ENCODE measurements at regions of chr19 and their contacts with region 1.

Region 1: DNA sequence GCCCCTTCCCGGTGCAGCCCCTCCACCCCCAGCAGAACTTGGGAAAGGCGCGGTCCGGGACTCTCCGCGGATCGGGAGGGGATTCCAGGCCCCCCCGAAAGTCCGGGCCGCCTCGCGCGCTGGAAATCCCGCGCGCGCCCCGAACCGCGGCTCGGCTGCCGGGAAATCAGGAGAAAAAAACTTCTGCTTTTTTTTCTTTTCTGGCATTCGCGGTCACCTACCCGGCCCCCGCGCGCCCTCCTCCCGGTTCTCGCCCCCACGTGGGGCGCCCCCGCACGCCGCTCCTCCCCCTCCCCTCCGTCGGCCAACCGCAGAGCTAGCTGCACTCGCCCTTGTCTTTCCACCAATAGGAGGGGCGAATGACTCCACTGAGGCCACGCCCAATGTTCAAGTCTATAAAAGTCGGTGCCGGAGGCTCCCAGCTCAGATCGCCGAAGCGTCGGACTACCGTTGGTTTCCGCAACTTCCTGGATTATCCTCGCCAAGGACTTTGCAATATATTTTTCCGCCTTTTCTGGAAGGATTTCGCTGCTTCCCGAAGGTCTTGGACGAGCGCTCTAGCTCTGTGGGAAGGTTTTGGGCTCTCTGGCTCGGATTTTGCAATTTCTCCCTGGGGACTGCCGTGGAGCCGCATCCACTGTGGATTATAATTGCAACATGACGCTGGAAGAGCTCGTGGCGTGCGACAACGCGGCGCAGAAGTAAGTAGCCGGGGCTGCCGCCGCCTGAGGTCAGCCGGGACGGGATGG is at the start of gene GADD45B:
- DNase-seq: peak; percentile 98 to 99
- H3K4me3 ChIP-seq: peak within 1 kb of the TSS; percentile 75 to 99 (median 92)
- H3K27ac ChIP-seq: peak within 1 kb of the TSS; percentile 91 to 95 (median 93)
- H3K4me1 ChIP-seq: peaks cover 15 to 44% (median 43%) of the 10 kb centered on the region in 4 donors
- H3K27me3 ChIP-seq: no peaks in the 10 kb centered on the region
- CTCF ChIP-seq: no peak
- EP300 ChIP-seq: peak; percentile 53
- POLR2A ChIP-seq: peak in 3 of 4 donors; percentile 81 to 100 (median 100)
- total RNA-seq, gene GADD45B: 61.6 to 588 (median 91.0) TPM

Region 2: DNA sequence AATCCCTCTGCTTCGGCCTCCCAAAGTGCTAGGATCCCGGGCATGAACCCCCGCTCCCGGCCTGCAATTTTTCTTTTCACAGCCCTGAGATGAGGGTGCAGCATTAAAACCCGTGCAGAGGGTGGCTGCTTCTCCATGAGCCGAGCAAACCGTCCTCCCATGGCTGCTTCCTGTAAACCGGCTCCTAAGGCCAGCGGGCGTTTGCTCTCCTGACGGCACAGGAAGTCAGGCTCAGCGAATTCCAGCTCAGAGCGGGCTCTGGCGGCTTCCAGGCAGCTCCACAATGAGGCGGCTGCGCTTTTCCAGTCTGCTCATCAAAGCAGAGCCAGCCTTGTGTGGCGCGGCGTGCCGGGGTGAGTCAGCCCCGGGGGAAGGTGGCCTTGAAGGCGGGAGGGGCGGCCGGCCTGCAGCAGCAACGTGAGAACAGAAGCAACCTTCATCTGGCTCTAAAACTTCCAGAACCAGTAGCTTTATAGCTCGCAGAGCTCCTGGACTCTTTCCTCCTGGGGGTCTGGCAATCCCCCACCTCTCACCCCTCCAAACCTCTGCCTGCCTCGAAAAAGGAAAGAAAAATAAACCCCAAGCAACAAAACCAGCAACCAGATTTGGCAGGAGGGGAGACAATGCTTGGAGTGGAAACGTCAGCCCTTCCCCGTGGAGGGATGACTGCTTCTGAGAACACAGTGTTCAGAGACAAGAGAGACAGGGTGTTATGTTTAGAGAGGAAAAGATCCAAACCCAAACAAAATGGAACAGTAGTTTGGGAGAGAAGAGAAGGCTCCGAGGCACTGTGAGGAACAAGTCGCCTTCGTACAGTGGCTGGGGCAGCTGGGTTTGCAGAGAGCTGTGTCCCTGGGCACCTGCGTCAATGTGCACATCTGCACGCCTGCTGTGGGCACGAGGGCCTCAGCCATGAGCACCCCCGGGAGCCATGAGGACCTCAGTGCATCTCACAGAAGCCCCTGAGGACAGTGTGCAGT is 67.9 kb after region 1 on chr19:
- intact Hi-C with region 1: loop called (anchors 10 kb)
- DNase-seq: peak; percentile 91 to 97
- H3K4me3 ChIP-seq: peak overlapping the region; percentile 12 to 30 (median 20)
- H3K27ac ChIP-seq: peak overlapping the region; percentile 47 to 94 (median 90)
- H3K4me1 ChIP-seq: peaks cover 67 to 74% (median 70%) of the 10 kb centered on the region in 4 donors
- H3K27me3 ChIP-seq: no peaks in the 10 kb centered on the region
- CTCF ChIP-seq: peak in 4 of 7 experiments; percentile 8 to 37 (median 14)
- EP300 ChIP-seq: peak; percentile 93
- POLR2A ChIP-seq: no peak

Region 3: DNA sequence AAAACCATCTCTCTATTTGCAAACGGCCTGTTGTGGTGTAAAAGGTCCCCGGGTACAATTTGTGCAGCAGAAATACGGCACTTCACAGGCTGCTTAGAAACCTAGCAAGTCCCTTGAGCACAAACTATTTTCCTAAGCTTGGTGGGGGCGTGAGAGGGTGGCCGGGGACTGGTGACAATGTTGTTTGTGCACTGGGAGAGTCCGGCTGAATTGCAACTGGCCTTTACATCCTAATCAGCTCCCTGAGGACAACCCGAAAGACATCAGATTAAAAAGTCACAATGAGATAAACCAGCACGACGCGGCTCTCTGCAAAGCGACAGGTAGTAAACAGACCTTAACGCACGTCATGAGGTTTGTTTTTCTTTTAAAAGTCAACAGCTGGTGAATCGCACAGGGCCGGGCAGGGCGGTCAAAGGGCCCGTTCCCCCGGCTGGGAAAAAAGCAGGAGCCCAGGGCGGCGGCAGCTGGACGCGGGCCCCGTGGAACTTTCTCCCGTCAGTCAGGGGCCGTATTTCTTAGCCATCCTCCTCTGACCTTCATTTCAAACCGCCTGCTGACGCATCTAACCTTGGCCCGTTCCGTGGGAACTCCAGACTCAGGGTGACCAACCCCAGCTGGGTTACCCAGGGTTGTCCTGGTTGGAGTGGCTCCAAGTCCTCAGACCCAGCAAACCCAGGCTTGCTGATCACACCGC is 112.4 kb after region 1 on chr19:
- intact Hi-C with region 1: loop called (anchors 10 kb)
- DNase-seq: peak; percentile 85 to 86
- H3K4me3 ChIP-seq: peak overlapping the region in 2 of 4 donors; percentile 6 to 9
- H3K27ac ChIP-seq: peak overlapping the region; percentile 76 to 89 (median 85)
- H3K4me1 ChIP-seq: peaks cover 20 to 34% (median 28%) of the 10 kb centered on the region in 4 donors
- H3K27me3 ChIP-seq: no peaks in the 10 kb centered on the region
- CTCF ChIP-seq: no peak
- EP300 ChIP-seq: peak; percentile 20
- POLR2A ChIP-seq: no peak

Region 4: DNA sequence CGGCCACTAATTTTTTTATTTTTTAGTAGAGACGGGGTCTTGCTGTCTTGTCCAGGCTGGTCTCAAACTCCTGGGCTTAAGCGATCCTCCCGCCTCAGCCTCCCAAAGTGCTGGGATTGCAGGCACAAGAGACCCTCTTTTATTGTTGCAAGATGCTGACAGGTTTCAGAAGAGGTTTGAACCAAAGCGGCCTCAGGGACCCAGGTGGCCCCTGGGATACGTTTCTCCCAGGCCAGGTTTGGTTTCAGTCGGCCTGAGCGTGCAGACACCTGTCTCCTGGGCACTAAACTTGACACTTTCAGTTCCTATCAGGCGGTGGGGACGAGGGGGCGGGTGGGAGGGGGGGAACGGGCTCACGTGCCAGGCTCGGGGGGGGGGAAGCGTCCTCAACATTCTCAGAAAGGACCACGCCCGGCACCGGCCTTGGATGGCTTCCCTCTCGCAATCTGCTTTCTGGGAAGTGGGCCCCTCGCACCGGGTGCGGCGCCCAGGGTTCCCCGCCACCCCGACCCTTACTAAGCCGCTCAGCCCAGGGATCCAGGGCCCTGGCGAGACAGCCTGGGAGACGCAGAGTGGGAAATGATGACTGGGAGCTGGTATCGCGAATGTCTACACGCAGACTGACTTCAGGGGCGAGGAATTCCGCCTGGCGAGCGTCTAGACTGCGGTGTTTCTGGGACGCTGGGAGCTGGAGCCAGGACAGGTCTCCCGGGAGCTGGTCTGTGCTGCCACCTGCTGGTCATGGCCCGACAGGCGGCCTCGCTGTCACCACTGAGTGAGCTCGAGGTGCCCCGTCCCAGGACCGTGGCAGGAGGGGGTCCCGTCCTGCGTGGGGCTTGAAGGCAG is 135.0 kb after region 1 on chr19:
- intact Hi-C with region 1: loop called (anchors 5 kb)
- DNase-seq: peak; percentile 96
- H3K4me3 ChIP-seq: peak overlapping the region; percentile 43 to 50 (median 45)
- H3K27ac ChIP-seq: peak overlapping the region; percentile 85 to 92 (median 88)
- H3K4me1 ChIP-seq: peaks cover 6 to 31% (median 18%) of the 10 kb centered on the region in 4 donors
- H3K27me3 ChIP-seq: no peaks in the 10 kb centered on the region
- CTCF ChIP-seq: peak in 6 of 7 experiments; percentile 83 to 98 (median 96)
- EP300 ChIP-seq: peak; percentile 63
- POLR2A ChIP-seq: peak in 1 of 4 donors; percentile 34